Activated T-helper 1 cell treated with anti-CD3 and anti-CD28 coated beads, Interleukin-12 subunit alpha, Interleukin-12 subunit beta, Interleukin-2, Interleukin-4 antibody, amounts not matched to agents 30 ng/mL and 10 ng/mL and 1 ng/mL, durations not matched to agents 14 hours and 24 hours and 36 hours (primary cell): ENCODE measurements at regions of chr4 and their contacts with region 1.

Region 1: DNA sequence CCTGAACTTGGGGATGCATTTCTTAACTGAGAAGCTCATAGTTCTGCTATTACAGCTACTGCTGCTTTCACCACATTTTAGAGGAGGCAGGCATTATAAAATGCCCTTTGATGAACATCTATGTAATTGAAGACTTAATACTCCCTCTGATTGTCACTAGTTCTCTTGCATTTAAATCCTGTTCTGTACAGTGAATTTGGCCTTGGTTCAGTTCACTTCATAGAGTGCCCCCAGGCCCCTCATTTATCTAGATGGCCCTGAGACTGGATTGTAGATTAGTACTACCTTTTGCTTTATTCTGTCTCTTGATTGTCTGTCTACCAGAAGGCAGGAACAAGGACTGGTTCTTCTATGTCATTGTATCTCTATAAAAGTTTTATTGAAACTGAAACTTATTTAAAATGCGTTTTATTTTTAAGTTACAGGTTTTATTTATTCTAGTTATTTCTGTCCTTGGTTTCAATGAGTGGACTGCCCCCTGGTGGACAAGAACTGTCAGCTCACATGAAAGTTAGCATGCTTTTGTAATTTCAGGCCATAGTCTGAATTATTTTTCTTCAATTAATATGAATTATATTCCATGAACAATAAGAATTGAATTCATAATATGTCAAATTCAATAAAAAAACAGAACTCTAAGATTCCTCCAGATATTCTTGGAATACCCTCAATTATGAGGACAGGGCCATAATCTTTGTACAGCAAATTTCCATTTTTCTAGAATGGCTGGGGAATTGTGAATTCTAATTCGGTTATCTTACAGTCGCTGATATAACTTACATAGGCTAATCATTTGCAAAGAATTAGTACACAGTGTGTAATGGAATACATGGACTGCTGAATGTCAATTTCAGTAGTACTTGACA is 47.2 kb upstream of the TMEM33 start:
- DNase-seq: no peak
- H3K4me3 Mint-ChIP-seq: no peak overlapping the region
- H3K27ac Mint-ChIP-seq: no peak overlapping the region
- H3K4me1 Mint-ChIP-seq: peaks cover 1% of the 10 kb centered on the region
- H3K27me3 Mint-ChIP-seq: peaks cover 23% of the 10 kb centered on the region

Region 2: DNA sequence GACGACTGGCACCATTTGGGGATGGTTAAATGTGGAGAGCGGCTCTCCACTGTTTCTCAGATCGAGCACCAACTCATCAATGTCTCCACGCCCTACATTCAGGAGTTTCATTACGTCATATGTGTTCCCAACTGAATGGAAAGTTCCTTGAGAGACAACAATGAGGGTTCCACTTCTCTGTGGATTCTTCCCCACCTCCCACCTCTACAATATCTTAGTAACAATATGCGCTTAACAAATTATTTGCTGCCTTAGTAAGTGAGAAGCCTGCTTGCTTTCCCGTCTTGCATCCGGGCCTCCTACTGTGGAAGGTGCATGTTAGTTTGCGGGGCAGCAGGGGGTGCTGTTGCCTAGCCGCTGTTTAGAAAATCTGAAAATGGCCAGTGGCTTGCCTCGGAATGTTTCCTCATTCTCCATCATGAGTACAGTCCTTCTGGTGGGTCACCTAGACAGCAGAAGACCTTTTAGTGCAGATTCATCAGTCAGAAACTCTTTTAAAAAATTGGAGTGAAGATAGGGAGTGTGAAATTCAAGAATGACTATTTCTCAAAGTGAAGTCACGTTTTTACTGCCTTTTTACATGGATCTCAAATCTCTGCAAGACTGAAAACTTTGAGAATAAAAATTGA is 195.2 kb before region 1 on chr4:
- intact Hi-C with region 1: loop called (anchors 1 kb)
- DNase-seq: peak; percentile 5
- H3K4me3 Mint-ChIP-seq: no peak overlapping the region
- H3K27ac Mint-ChIP-seq: no peak overlapping the region
- H3K4me1 Mint-ChIP-seq: no peaks in the 10 kb centered on the region
- H3K27me3 Mint-ChIP-seq: no peaks in the 10 kb centered on the region

Region 3: DNA sequence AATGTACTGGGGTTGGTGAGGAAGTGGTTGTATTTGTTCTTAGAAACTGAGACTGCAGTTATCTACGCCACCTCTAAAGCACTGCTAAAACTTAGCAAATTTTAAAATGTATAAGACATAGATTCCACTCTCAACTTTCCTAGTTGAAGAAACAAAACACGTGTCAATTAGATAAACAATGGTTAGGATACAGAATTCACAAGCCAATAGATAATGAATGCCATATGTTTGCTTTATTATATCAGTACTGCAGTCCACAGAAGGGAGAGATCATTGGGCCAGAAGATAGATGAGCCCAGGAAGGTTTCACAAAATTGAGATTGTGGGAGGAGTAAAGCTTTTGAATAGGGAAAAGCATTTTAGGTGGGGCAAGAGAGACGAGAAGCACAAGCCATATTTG is 61.5 kb after region 1 on chr4:
- intact Hi-C with region 1: no loop called
- DNase-seq: no peak
- H3K4me3 Mint-ChIP-seq: no peak overlapping the region
- H3K27ac Mint-ChIP-seq: no peak overlapping the region
- H3K4me1 Mint-ChIP-seq: peaks cover 16% of the 10 kb centered on the region
- H3K27me3 Mint-ChIP-seq: no peaks in the 10 kb centered on the region